ENCODE measurements at regions of chr17 and their contacts with region 1.

Region 1: DNA sequence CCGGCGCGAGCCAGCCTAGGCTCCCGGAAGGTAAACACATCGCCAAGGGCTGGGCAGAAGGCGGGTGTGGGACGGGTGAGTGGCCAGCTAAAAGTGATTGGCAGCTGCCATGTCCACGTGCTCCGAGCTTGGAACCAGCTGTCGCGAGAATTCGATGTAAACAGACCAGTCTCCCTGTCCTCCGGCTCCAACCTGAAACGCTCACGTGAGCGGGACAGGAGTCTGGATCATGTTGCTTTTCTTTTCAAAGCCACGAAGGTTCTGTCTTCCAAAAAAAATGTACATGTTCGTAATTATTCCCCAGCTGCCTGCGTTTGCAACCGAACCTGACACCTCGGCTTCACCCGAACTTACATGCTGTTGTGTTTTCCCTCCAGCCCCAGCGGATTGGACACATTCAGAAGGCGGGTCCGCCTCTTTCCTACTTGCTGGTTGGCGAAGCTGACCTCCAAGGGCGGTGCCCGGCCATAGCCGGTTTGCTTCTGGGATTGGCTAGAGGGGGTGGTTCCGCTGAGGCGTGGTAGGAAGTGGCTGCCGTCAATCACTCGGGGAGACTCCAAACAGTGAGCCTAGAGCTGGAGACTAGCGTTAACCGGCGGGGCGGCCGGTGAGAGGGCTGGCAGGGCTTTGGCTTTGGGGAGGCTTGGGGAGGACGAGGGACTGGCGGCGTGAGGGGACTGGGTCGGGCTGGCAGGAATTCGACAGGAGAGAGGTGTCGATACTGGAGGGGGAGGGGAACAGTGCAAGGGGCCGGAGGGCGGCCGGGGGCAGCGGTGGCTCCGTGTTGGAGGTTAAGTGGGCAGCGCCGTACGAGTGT is at the start of gene BCAS3:
- DNase-seq: peak; percentile 84
- ATAC-seq: peak; percentile 95
- H3K4me3 Mint-ChIP-seq: peak within 1 kb of the TSS; percentile 99
- H3K27ac Mint-ChIP-seq: peak within 1 kb of the TSS; percentile 94
- H3K4me1 Mint-ChIP-seq: peaks cover 23% of the 10 kb centered on the region
- H3K27me3 Mint-ChIP-seq: no peaks in the 10 kb centered on the region
- CTCF ChIP-seq: no peak
- total RNA-seq, gene BCAS3: 25.8 and 37.5 TPM in 2 replicates

Region 2: GRCh38 chr17:59106463-59107305 is 1570.8 kb before region 1 on chr17 and contains the start of gene TRIM37:
- CTCF ChIA-PET with region 1: no interaction called
- POLR2A ChIA-PET with region 1: no interaction called
- intact Hi-C with region 1: loop called (anchors 2 kb)
- DNase-seq: peak; percentile 98
- ATAC-seq: peak; percentile 96
- H3K4me3 Mint-ChIP-seq: peak within 1 kb of the TSS; percentile 94
- H3K27ac Mint-ChIP-seq: peak within 1 kb of the TSS; percentile 82
- H3K4me1 Mint-ChIP-seq: peaks cover 28% of the 10 kb centered on the region
- H3K27me3 Mint-ChIP-seq: no peaks in the 10 kb centered on the region
- CTCF ChIP-seq: no peak
- total RNA-seq, gene TRIM37: 16.4 and 17.3 TPM in 2 replicates

Region 3: GRCh38 chr17:60652454-60653247 is 24.9 kb before region 1 on chr17:
- CTCF ChIA-PET with region 1: no interaction called
- POLR2A ChIA-PET with region 1: interaction called, 3 read pairs
- intact Hi-C with region 1: loop called (anchors 1 kb)
- DNase-seq: no peak
- ATAC-seq: peak; percentile 100
- H3K4me3 Mint-ChIP-seq: peak overlapping the region; percentile 41
- H3K27ac Mint-ChIP-seq: peak overlapping the region; percentile 15
- H3K4me1 Mint-ChIP-seq: peaks cover 25% of the 10 kb centered on the region
- H3K27me3 Mint-ChIP-seq: no peaks in the 10 kb centered on the region
- CTCF ChIP-seq: no peak

Region 4: DNA sequence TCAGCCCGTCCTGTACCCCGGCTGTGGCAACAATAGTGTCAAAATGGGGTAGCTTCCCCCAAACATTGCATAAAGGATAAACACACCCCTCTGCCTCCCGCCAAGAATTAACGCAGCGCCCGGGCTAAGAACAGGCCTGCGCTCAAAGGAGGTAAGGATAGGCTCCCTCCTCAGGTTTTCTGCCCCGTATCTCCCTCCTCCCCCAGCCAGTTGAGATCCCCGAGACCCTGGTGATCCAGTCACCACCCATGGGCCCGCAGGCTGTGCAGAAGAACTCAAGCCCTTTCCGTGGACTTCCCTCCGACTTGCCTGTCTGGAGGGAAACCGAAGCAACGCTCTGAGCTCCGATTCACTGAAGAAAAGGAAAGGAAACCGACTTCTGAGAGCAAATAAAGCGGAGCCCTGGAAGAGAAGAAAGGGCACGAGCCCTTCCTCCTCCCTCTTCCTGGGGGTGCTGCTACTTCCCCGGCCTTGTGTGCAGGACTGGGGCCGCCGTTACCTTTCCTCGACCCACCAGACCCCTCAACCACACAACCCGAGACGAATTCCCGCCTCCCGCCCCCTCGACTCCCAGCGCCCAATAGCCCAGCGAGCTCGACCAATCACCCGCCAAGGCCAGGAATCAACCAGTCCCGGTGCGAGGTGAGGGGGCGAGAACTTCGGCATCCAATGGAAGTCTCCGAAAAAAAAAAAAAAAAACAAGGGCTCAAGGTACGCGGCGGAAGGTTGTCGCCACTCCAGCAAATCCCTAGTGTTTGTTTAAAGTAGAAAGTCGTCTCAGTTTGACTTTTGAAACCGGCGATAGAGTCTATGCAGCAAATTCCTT is 1185.7 kb after region 1 on chr17 and contains the start of gene BRIP1:
- CTCF ChIA-PET with region 1: no interaction called
- POLR2A ChIA-PET with region 1: interaction called, 3 read pairs
- intact Hi-C with region 1: loop called (anchors 5 kb)
- DNase-seq: peak; percentile 70
- ATAC-seq: peak; percentile 99
- H3K4me3 Mint-ChIP-seq: peak within 1 kb of the TSS; percentile 94
- H3K27ac Mint-ChIP-seq: peak within 1 kb of the TSS; percentile 83
- H3K4me1 Mint-ChIP-seq: peaks cover 18% of the 10 kb centered on the region
- H3K27me3 Mint-ChIP-seq: no peaks in the 10 kb centered on the region
- CTCF ChIP-seq: no peak
- total RNA-seq, gene BRIP1: 2.0 and 2.5 TPM in 2 replicates

Region 5: DNA sequence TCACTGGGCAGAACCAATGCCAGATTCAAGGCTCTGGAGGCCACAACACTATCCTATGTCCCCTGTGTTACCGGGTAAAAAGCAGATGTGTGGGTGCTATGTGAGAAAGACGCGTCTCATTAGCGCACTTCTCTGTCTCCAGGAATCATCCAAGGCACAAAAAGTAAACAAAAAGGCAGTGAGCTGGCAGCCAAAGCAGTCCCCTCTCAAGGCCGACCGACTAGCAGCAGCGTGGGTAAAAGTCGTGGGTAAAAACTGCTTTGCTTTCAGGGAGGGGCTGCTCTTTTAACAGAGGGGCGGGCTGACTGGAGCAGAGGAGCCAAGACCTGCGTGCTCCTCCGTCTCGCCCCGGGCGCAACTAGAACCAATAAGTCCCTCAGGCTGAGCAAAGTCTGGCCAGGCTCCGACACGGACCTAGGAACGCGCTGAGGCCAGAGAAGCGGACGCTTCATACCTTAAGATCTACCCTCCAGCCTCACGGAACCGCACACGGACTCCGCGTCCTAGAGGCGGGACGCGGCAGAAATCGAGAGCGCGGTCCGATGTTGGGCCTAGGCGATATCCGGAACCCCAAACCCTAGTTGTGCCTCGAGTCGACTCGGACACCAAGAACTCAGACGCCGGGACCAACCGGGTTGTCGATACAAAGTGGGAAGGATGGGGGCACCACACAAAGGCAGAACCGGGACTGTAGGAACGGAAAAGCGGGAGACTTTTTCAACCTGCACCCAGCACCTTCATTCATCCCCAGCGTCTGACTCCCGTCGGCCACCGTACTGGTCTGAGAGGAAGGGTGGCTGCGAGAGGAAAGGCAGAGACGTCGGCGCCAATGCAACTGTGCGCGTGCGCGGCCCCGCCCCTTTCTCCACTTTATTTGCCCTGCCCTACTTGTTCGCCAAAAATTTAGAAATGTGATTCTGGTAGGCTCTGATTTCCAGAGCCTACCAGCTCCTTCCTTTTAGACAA is 1250.0 kb after region 1 on chr17 and contains the start of gene INTS2:
- CTCF ChIA-PET with region 1: no interaction called
- POLR2A ChIA-PET with region 1: no interaction called
- intact Hi-C with region 1: loop called (anchors 1 kb)
- DNase-seq: peak; percentile 92
- ATAC-seq: peak; percentile 92
- H3K4me3 Mint-ChIP-seq: peak within 1 kb of the TSS; percentile 90
- H3K27ac Mint-ChIP-seq: peak within 1 kb of the TSS; percentile 93
- H3K4me1 Mint-ChIP-seq: peaks cover 17% of the 10 kb centered on the region
- H3K27me3 Mint-ChIP-seq: no peaks in the 10 kb centered on the region
- CTCF ChIP-seq: no peak
- total RNA-seq, gene INTS2: 21.4 and 21.8 TPM in 2 replicates

Measured in activated B cell treated with CpG ODN at 0.5 μM for 24 hours (primary cell).